WTC11 (cell line): ENCODE measurements at regions of chr6 and their contacts with region 1.

Region 1: GRCh38 chr6:32933636-32934085 is 7.2 kb downstream of the HLA-DMB start:
- DNase-seq: peak; percentile 82
- ATAC-seq: peak; percentile 84
- H3K4me3 Mint-ChIP-seq: no peak overlapping the region
- H3K27ac Mint-ChIP-seq: no peak overlapping the region
- H3K4me1 Mint-ChIP-seq: no peaks in the 10 kb centered on the region
- H3K27me3 Mint-ChIP-seq: peaks cover 36% of the 10 kb centered on the region
- CTCF ChIP-seq: peak; percentile 49

Region 2: DNA sequence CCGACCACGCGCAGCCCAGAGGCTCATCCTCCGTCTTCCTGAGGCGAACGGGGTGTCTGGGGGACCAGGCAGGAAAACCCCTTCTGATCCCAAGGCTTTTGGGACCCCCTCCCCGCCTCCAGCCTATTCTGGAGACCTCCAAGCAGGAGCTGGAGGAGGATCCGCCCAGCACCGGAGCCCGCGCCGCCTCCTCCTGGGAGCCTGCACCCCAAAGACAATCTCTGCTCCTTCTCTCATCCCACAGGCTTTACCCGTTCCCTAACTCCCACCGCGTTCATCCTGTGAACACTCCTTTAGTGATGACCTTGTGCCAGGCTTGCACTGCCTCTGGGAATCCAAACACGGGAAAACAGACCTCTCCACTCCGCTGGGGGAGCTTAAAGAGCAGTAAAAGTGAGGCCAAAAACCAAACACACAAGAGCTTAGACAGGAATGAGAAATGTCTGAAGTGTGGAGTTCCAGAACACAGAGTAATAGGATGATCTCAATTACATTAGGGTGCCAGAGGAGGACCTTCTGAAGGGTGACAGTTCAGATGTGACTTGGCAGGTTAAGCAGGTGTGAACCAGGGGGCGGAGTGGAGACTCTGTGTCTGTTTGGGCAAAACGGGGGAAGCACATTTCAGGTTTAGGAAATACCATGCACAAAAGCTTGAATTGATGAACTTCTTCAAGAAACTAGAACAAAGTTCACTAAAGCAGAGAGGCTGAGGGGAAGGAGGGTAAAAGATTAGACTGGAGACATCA is 411.2 kb before region 1 on chr6:
- CTCF ChIA-PET with region 1: no interaction called
- POLR2A ChIA-PET with region 1: no interaction called
- DNase-seq: no peak
- ATAC-seq: no peak
- H3K4me3 Mint-ChIP-seq: peak overlapping the region; percentile 75; the same call in 1 of the 2 replicates
- H3K27ac Mint-ChIP-seq: no peak overlapping the region
- H3K4me1 Mint-ChIP-seq: no peaks in the 10 kb centered on the region
- H3K27me3 Mint-ChIP-seq: peaks cover 42% of the 10 kb centered on the region
- CTCF ChIP-seq: no peak

Region 3: GRCh38 chr6:32853541-32854375 is 79.9 kb before region 1 on chr6 and contains the starts of genes PSMB9 and TAP1:
- CTCF ChIA-PET with region 1: interaction called, 11 read pairs
- POLR2A ChIA-PET with region 1: no interaction called
- DNase-seq: peak; percentile 94
- ATAC-seq: peak; percentile 91
- H3K4me3 Mint-ChIP-seq: peak within 1 kb of the TSS; percentile 88
- H3K27ac Mint-ChIP-seq: peak within 1 kb of the TSS; percentile 90
- H3K4me1 Mint-ChIP-seq: peaks cover 14% of the 10 kb centered on the region
- H3K27me3 Mint-ChIP-seq: peaks cover 91% of the 10 kb centered on the region
- CTCF ChIP-seq: 0 out of 2 replicates have a peak, but pooled peaks have one; percentile 31
- total RNA-seq, gene PSMB9: 1.8 to 4.3 TPM (median 4.0 TPM) in 3 replicates
- total RNA-seq, gene TAP1: 13.6 to 15.9 TPM (median 15.7 TPM) in 3 replicates

Region 4: DNA sequence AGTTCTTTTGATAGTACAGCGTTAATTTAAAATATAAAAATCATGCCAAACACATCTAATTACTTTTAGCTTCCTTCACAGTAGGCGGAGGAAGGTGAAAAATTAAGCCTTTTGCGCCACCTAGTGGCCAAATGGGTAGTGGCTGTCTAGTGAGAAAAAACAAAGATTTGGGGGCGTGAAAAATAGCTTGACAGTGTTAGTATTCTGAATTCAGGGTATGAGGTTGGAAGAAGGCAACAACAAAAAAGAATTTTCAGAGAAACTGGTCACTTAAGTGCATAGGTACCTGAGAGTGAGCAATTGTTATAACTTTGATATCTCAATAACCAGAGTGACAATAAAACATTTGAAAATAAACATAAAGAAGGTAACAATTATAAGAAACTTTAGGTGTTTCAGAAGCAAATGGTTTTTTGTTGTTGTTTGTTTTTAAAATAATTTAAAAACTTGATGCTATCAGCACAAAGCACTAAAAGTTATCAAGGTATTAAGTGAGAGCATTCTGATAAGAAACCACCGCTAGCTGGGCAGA is 65.3 kb before region 1 on chr6:
- CTCF ChIA-PET with region 1: interaction called, 20 read pairs
- POLR2A ChIA-PET with region 1: no interaction called
- DNase-seq: peak; percentile 79
- ATAC-seq: peak; percentile 50
- H3K4me3 Mint-ChIP-seq: no peak overlapping the region
- H3K27ac Mint-ChIP-seq: no peak overlapping the region
- H3K4me1 Mint-ChIP-seq: no peaks in the 10 kb centered on the region
- H3K27me3 Mint-ChIP-seq: peaks cover 16% of the 10 kb centered on the region
- CTCF ChIP-seq: peak; percentile 86

Region 5: GRCh38 chr6:32905078-32905477 is 28.6 kb before region 1 on chr6:
- CTCF ChIA-PET with region 1: interaction called, 18 read pairs
- POLR2A ChIA-PET with region 1: no interaction called
- DNase-seq: no peak
- ATAC-seq: no peak
- H3K4me3 Mint-ChIP-seq: no peak overlapping the region
- H3K27ac Mint-ChIP-seq: no peak overlapping the region
- H3K4me1 Mint-ChIP-seq: no peaks in the 10 kb centered on the region
- H3K27me3 Mint-ChIP-seq: no peaks in the 10 kb centered on the region
- CTCF ChIP-seq: no peak

Region 6: DNA sequence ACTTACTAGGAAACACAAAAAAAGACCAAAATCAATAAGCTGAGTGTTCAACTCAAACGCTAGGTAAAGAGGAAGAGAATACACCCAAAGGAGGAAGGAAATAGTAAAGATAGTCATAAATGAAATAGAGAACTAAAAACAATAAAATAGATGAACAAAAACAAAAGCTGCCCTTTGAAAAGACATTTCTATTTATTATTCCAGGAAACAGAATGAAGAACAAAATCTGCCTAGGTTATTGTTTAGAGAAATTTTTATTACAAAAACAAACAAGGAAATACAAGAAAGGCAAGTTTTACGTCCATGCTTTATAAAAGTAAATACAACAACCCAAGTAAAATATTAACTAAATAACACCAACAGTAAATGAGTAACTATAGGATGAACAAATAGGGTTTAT is 12.9 kb before region 1 on chr6:
- CTCF ChIA-PET with region 1: interaction called, 14 read pairs
- POLR2A ChIA-PET with region 1: no interaction called
- DNase-seq: no peak
- ATAC-seq: no peak
- H3K4me3 Mint-ChIP-seq: no peak overlapping the region
- H3K27ac Mint-ChIP-seq: no peak overlapping the region
- H3K4me1 Mint-ChIP-seq: no peaks in the 10 kb centered on the region
- H3K27me3 Mint-ChIP-seq: peaks cover 5% of the 10 kb centered on the region; the same call in 1 of the 2 replicates
- CTCF ChIP-seq: no peak

Region 7: DNA sequence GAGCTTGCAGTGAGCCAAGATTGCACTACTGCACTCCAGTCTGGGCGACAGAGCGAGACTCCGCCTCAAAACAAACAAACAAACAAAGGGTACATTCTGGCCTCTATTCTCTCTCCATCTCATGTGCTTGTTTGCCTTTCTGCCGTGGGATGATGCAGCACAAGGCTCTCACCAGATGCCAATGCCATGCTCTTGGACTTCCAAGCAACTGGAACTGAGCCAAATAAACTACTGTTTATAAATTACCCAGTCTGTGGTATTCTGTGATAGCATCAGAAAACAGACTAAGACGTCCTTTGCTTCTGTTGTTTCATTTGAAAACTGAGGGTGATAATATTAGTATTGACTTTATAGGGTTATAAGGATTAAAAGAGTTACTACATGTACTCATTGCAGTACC is 31.1 kb after region 1 on chr6:
- CTCF ChIA-PET with region 1: interaction called, 16 read pairs
- POLR2A ChIA-PET with region 1: no interaction called
- DNase-seq: no peak
- ATAC-seq: no peak
- H3K4me3 Mint-ChIP-seq: no peak overlapping the region
- H3K27ac Mint-ChIP-seq: no peak overlapping the region
- H3K4me1 Mint-ChIP-seq: peaks cover 10% of the 10 kb centered on the region
- H3K27me3 Mint-ChIP-seq: no peaks in the 10 kb centered on the region
- CTCF ChIP-seq: no peak